Esophagus squamous epithelium (tissue), 5 donors: ENCODE measurements at regions of chr1 and their contacts with region 1.

Region 1: GRCh38 chr1:89598450-89599331 is 34.2 kb upstream of the LRRC8C start:
- DNase-seq: no peak
- H3K4me3 ChIP-seq: no peak overlapping the region
- H3K27ac ChIP-seq: no peak overlapping the region
- H3K4me1 ChIP-seq: peaks cover 0 to 5% (median 0%) of the 10 kb centered on the region in 3 donors
- H3K27me3 ChIP-seq: no peaks in the 10 kb centered on the region
- CTCF ChIP-seq: peak; percentile 58 to 77 (median 66)
- POLR2A ChIP-seq: no peak

Region 2: GRCh38 chr1:88946861-88947260 is 651.8 kb before region 1 on chr1:
- intact Hi-C with region 1: no loop called
- DNase-seq: no peak
- H3K4me3 ChIP-seq: no peak overlapping the region
- H3K27ac ChIP-seq: no peak overlapping the region
- H3K4me1 ChIP-seq: no peaks in the 10 kb centered on the region
- H3K27me3 ChIP-seq: no peaks in the 10 kb centered on the region
- CTCF ChIP-seq: no peak
- POLR2A ChIP-seq: no peak

Region 3: DNA sequence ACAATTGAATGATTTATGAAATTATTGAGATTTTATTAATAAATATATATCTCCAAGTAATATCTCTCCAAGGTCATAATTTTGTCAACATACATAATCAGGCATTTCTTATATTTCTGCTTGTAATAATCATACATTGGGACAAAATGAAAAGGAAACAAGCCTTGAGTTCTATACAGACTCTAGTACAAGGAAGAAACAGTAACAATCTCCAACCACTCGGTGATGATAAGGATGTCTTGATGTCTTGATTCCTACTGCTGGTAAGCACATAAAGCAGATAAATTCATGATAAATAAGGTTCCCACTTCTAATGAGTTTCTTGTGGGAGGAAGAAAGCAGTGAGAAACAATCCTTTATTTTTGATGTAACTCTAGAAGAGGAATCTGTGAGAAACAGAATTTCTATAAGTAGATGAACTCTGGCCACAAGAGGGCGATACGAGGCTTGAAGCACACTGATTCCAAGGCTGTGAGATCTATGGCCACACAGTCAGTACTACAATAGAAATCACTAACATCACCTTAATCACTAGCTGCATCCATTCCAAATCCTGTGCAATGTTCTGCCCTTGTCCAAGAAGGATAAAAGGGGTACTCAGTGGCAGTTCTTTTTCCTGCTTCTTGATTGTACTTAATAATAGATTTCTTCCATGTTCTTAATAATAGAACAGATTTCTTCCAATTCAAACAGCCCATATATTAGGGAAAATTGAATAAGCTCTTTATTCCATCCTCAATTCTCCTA is 115.5 kb before region 1 on chr1:
- intact Hi-C with region 1: loop called (anchors 5 kb)
- DNase-seq: no peak
- H3K4me3 ChIP-seq: no peak overlapping the region
- H3K27ac ChIP-seq: no peak overlapping the region
- H3K4me1 ChIP-seq: no peaks in the 10 kb centered on the region
- H3K27me3 ChIP-seq: no peaks in the 10 kb centered on the region
- CTCF ChIP-seq: peak; percentile 59 to 75 (median 71)
- POLR2A ChIP-seq: no peak

Region 4: DNA sequence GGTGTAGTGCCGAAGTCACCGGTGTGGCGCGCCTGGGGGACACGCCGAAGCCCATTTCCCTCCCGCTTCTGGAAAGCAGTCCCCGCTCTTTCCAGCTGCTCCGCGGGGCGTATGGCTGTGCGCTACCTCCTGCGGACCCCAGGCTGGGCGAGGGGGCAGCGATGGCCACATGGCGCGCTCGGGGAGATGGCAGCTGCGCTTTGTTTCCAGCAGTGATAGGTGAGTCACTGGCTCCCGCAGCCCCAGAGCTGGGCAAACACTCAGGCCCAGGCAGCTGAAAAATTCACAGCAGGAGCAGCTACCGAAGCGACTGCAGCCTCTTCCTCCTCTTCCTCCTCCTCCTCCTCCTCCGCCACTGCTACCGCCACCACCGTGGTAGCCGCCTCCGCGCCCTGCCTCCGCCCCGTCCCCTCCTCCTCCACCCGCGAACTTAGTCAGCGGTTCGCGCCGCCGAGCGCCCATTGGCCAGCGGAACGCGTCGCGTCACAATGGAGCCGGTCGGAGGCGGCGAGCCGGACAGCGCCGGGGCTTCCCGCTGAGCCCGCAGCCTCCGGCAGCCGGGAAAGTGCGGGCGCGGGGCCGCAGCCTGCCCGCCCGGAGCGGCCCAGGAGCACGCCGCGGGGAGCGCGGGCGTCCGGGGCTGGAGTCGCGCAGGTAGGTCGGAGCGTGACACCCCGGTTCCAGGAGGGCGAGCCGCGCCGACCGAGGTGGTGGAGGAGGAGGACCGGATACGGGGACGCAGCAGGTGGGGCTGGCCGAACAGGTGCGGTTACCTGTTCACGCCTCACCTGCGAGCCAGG is 74.1 kb before region 1 on chr1 and contains the start of gene LRRC8B:
- intact Hi-C with region 1: loop called (anchors 10 kb)
- DNase-seq: peak; percentile 48
- H3K4me3 ChIP-seq: peak within 1 kb of the TSS; percentile 75 to 100 (median 96)
- H3K27ac ChIP-seq: peak within 1 kb of the TSS; percentile 90 to 98 (median 94)
- H3K4me1 ChIP-seq: peaks cover 4 to 40% (median 19%) of the 10 kb centered on the region in 3 donors
- H3K27me3 ChIP-seq: no peaks in the 10 kb centered on the region
- CTCF ChIP-seq: no peak
- POLR2A ChIP-seq: peak in 2 of 4 donors; percentile 46 to 88
- total RNA-seq, gene LRRC8B: 8.7 to 19.5 (median 9.2) TPM

Region 5: GRCh38 chr1:89929467-89930063 is 330.9 kb after region 1 on chr1:
- intact Hi-C with region 1: no loop called
- DNase-seq: no peak
- H3K4me3 ChIP-seq: no peak overlapping the region
- H3K27ac ChIP-seq: no peak overlapping the region
- H3K4me1 ChIP-seq: no peaks in the 10 kb centered on the region
- H3K27me3 ChIP-seq: no peaks in the 10 kb centered on the region
- CTCF ChIP-seq: no peak
- POLR2A ChIP-seq: no peak

Region 6: DNA sequence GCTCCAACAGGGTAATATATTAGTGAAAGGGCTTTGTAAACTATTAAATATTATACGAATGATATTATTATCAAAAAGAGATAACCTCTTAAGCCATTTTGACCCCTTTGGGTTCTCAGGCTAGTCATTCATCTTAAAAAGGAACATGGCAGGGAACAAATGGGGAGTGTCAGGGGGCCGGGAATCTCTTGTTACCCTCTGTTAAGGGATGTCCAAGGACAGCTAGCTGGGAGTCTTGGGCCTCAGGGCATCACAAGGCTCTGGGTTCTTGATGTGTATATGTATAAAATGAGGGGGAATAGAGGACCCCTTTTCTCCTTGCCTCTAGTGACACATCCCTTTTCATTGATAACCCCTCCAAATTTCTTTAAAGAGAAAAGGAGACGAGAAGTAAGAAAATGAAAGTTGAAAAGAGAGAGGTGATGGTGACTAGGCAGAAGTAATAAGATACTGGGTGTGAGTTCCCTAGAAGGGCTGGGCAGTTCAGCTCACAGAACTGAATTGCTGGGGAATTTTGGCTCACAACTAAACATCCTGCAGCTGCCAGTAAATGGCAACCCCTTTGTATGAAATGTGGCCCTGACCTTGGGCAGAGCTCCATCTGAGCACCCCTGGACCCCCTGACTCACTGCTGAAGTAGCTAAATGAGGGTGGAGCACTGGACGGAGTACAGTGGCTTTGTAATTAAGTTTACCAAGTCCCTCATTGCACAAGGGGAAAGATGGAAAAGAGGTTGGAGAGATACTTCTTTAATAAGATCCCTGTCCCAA is 376.2 kb after region 1 on chr1:
- intact Hi-C with region 1: no loop called
- DNase-seq: no peak
- H3K4me3 ChIP-seq: no peak overlapping the region
- H3K27ac ChIP-seq: no peak overlapping the region
- H3K4me1 ChIP-seq: peaks cover 0 to 12% (median 0%) of the 10 kb centered on the region in 3 donors
- H3K27me3 ChIP-seq: no peaks in the 10 kb centered on the region
- CTCF ChIP-seq: no peak
- POLR2A ChIP-seq: no peak